ENCODE measurements at regions of chr1 and their contacts with region 1.

Region 1: GRCh38 chr1:23344111-23344986 is at the start of gene HNRNPR:
- DNase-seq: peak; percentile 99
- H3K4me3 ChIP-seq: peak within 1 kb of the TSS; percentile 69 to 94 (median 90)
- H3K4me3 Mint-ChIP-seq: peak within 1 kb of the TSS; percentile 90 to 95
- H3K27ac ChIP-seq: peak within 1 kb of the TSS; percentile 81 to 95
- H3K27ac Mint-ChIP-seq: peak within 1 kb of the TSS; percentile 91 to 96 (median 93)
- H3K4me1 ChIP-seq: peaks cover 28 to 41% of the 10 kb centered on the region in 2 donors
- H3K4me1 Mint-ChIP-seq: peaks cover 45% of the 10 kb centered on the region
- H3K27me3 ChIP-seq: no peaks in the 10 kb centered on the region
- H3K27me3 Mint-ChIP-seq: peaks cover 0 to 4% (median 2%) of the 10 kb centered on the region in 3 donors
- CTCF ChIP-seq: no peak
- polyA plus RNA-seq, gene HNRNPR: 58.5 to 112 (median 82.9) TPM

Region 2: DNA sequence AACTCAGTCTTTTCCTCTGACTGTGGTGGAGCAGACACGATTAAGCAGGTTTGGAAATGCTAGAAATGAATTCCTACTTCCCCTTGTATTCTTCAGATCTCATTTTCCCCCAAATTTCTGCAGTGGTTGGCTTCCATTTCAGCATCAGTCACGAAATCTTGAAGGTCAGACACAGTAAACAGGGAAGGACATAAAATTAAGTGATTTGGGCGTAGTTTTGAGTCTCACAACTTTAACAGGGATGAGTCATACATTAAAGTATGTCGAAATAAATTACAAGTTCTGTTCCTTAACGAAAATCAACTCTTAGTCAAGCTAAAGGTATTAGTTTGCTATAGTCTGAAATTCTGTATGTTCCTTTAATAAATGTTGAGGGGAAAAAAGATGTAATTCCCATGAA is 61.4 kb before region 1 on chr1:
- intact Hi-C with region 1: loop called in 1 of 2 experiments (anchors 10 kb)
- DNase-seq: peak; percentile 79 to 88 (median 85)
- H3K4me3 ChIP-seq: peak overlapping the region in 1 of 3 experiments; percentile 11
- H3K4me3 Mint-ChIP-seq: no peak overlapping the region
- H3K27ac ChIP-seq: peak overlapping the region in 1 of 2 donors; percentile 79
- H3K27ac Mint-ChIP-seq: peak overlapping the region; percentile 50 to 88 (median 82)
- H3K4me1 ChIP-seq: peaks cover 17 to 34% of the 10 kb centered on the region in 2 donors
- H3K4me1 Mint-ChIP-seq: peaks cover 22% of the 10 kb centered on the region
- H3K27me3 ChIP-seq: no peaks in the 10 kb centered on the region
- H3K27me3 Mint-ChIP-seq: no peaks in the 10 kb centered on the region
- CTCF ChIP-seq: no peak

Region 3: GRCh38 chr1:23367791-23368561 is 23.6 kb after region 1 on chr1:
- intact Hi-C with region 1: loop called (anchors 1 to 2 kb)
- DNase-seq: peak; percentile 95 to 99 (median 97)
- H3K4me3 ChIP-seq: peak overlapping the region; percentile 86 to 100 (median 100)
- H3K4me3 Mint-ChIP-seq: peak overlapping the region; percentile 92 to 96
- H3K27ac ChIP-seq: peak overlapping the region; percentile 83 to 88
- H3K27ac Mint-ChIP-seq: peak overlapping the region; percentile 91 to 97 (median 93)
- H3K4me1 ChIP-seq: peaks cover 18 to 30% of the 10 kb centered on the region in 2 donors
- H3K4me1 Mint-ChIP-seq: peaks cover 31% of the 10 kb centered on the region
- H3K27me3 ChIP-seq: no peaks in the 10 kb centered on the region
- H3K27me3 Mint-ChIP-seq: peaks cover 0 to 3% (median 2%) of the 10 kb centered on the region in 3 donors
- CTCF ChIP-seq: no peak

Region 4: GRCh38 chr1:23403735-23404486 is 59.6 kb after region 1 on chr1:
- intact Hi-C with region 1: loop called in 1 of 2 experiments (anchors 5 kb)
- DNase-seq: peak; percentile 63 to 76 (median 68)
- H3K4me3 ChIP-seq: peak overlapping the region in 1 of 3 experiments; percentile 46
- H3K4me3 Mint-ChIP-seq: peak overlapping the region in 1 of 2 donors; percentile 59
- H3K27ac ChIP-seq: peak overlapping the region in 1 of 2 donors; percentile 49
- H3K27ac Mint-ChIP-seq: peak overlapping the region in 3 of 7 donors; percentile 22 to 49 (median 23)
- H3K4me1 ChIP-seq: peaks cover 32 to 38% of the 10 kb centered on the region in 2 donors
- H3K4me1 Mint-ChIP-seq: peaks cover 43% of the 10 kb centered on the region
- H3K27me3 ChIP-seq: no peaks in the 10 kb centered on the region
- H3K27me3 Mint-ChIP-seq: peaks cover 0 to 1% (median 0%) of the 10 kb centered on the region in 3 donors
- CTCF ChIP-seq: peak; percentile 94

Region 5: GRCh38 chr1:23528250-23528978 is 184.1 kb after region 1 on chr1:
- intact Hi-C with region 1: loop called in 1 of 2 experiments (anchors 5 kb)
- DNase-seq: peak; percentile 86 to 91 (median 86)
- H3K4me3 ChIP-seq: peak overlapping the region; percentile 39 to 93 (median 87)
- H3K4me3 Mint-ChIP-seq: peak overlapping the region; percentile 82 to 94
- H3K27ac ChIP-seq: peak overlapping the region; percentile 74 to 99
- H3K27ac Mint-ChIP-seq: peak overlapping the region; percentile 94 to 99 (median 97)
- H3K4me1 ChIP-seq: peaks cover 94 to 99% of the 10 kb centered on the region in 2 donors
- H3K4me1 Mint-ChIP-seq: peaks cover 90% of the 10 kb centered on the region
- H3K27me3 ChIP-seq: no peaks in the 10 kb centered on the region
- H3K27me3 Mint-ChIP-seq: peaks cover 0 to under 1% (median 0%) of the 10 kb centered on the region in 3 donors
- CTCF ChIP-seq: no peak